CD4-positive, alpha-beta T cell (primary cell): ENCODE measurements at regions of chr15 and their contacts with region 1.

Region 1: GRCh38 chr15:99076552-99077308 is 28.1 kb upstream of the SYNM start:
- DNase-seq: peak in 11 of 14 experiments; percentile 6 to 77 (median 19)
- ATAC-seq: peak; percentile 76
- H3K4me3 ChIP-seq: peak overlapping the region; percentile 46
- H3K4me3 Mint-ChIP-seq: peak overlapping the region; percentile 82
- H3K27ac ChIP-seq: no peak overlapping the region
- H3K27ac Mint-ChIP-seq: no peak overlapping the region
- H3K4me1 ChIP-seq: peaks cover 4% of the 10 kb centered on the region
- H3K4me1 Mint-ChIP-seq: peaks cover 6% of the 10 kb centered on the region
- H3K27me3 ChIP-seq: no peaks in the 10 kb centered on the region
- H3K27me3 Mint-ChIP-seq: peaks cover 10% of the 10 kb centered on the region
- CTCF ChIP-seq: peak; percentile 87

Region 2: DNA sequence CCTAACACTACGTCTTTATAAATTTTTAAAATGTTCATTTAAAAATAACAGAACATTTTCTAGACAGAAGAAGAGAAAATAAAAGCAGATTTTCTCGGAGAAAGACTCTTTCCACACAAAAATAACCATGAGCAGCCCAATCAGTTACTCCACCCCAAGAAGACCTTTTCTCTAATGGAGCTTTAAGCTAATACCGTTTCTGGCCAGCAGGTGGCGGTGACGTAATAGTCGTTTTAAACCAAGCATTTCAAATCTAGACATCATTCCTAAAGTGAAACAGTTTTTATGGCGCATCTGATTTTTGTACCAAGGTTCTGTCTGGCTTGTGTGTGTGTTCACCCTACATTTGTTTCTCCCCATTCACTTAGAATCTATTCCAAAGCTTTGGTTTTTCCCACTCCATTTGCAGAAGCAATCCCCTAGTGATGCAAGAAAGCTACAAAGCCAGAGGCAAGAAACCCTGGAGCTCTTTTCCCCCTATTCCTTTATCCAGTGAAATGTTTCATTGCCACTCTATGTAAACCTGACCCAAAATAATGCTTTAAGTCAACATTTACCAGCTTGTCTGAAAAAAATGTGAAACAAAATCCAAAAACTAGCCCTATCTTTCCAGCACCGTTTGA is 765.1 kb before region 1 on chr15:
- CTCF ChIA-PET with region 1: no interaction called
- POLR2A ChIA-PET with region 1: no interaction called
- intact Hi-C with region 1: loop called in 1 of 2 experiments (anchors 10 kb)
- DNase-seq: peak; percentile 23 to 72 (median 57)
- ATAC-seq: no peak
- H3K4me3 ChIP-seq: no peak overlapping the region
- H3K4me3 Mint-ChIP-seq: no peak overlapping the region
- H3K27ac ChIP-seq: no peak overlapping the region
- H3K27ac Mint-ChIP-seq: no peak overlapping the region
- H3K4me1 ChIP-seq: peaks cover 2% of the 10 kb centered on the region
- H3K4me1 Mint-ChIP-seq: no peaks in the 10 kb centered on the region
- H3K27me3 ChIP-seq: no peaks in the 10 kb centered on the region
- H3K27me3 Mint-ChIP-seq: peaks cover 31% of the 10 kb centered on the region
- CTCF ChIP-seq: peak; percentile 88

Region 3: GRCh38 chr15:98599909-98600691 is 476.6 kb before region 1 on chr15:
- CTCF ChIA-PET with region 1: no interaction called
- POLR2A ChIA-PET with region 1: no interaction called
- intact Hi-C with region 1: loop called in 1 of 2 experiments (anchors 10 kb)
- DNase-seq: peak in 13 of 14 experiments; percentile 10 to 58 (median 25)
- ATAC-seq: peak; percentile 85
- H3K4me3 ChIP-seq: peak overlapping the region; percentile 49
- H3K4me3 Mint-ChIP-seq: peak overlapping the region; percentile 88
- H3K27ac ChIP-seq: peak overlapping the region in 1 of 2 donors; percentile 35
- H3K27ac Mint-ChIP-seq: peak overlapping the region; percentile 84
- H3K4me1 ChIP-seq: peaks cover 11% of the 10 kb centered on the region
- H3K4me1 Mint-ChIP-seq: peaks cover 22% of the 10 kb centered on the region
- H3K27me3 ChIP-seq: no peaks in the 10 kb centered on the region
- H3K27me3 Mint-ChIP-seq: peaks cover 4% of the 10 kb centered on the region
- CTCF ChIP-seq: no peak

Region 4: GRCh38 chr15:98713585-98714001 is 363.1 kb before region 1 on chr15:
- CTCF ChIA-PET with region 1: no interaction called
- POLR2A ChIA-PET with region 1: no interaction called
- intact Hi-C with region 1: no loop called
- DNase-seq: peak in 5 of 14 experiments; percentile 11 to 56 (median 26)
- ATAC-seq: peak; percentile 58
- H3K4me3 ChIP-seq: no peak overlapping the region
- H3K4me3 Mint-ChIP-seq: peak overlapping the region; percentile 30
- H3K27ac ChIP-seq: no peak overlapping the region
- H3K27ac Mint-ChIP-seq: peak overlapping the region; percentile 64
- H3K4me1 ChIP-seq: peaks cover 46% of the 10 kb centered on the region
- H3K4me1 Mint-ChIP-seq: peaks cover 71% of the 10 kb centered on the region
- H3K27me3 ChIP-seq: no peaks in the 10 kb centered on the region
- H3K27me3 Mint-ChIP-seq: no peaks in the 10 kb centered on the region
- CTCF ChIP-seq: no peak

Region 5: GRCh38 chr15:99059010-99059981 is 17.4 kb before region 1 on chr15:
- CTCF ChIA-PET with region 1: interaction called, 24 read pairs
- POLR2A ChIA-PET with region 1: interaction called, 4 read pairs
- intact Hi-C with region 1: no loop called
- DNase-seq: peak in 13 of 14 experiments; percentile 6 to 75 (median 30)
- ATAC-seq: peak; percentile 71
- H3K4me3 ChIP-seq: peak overlapping the region; percentile 45
- H3K4me3 Mint-ChIP-seq: peak overlapping the region; percentile 73
- H3K27ac ChIP-seq: no peak overlapping the region
- H3K27ac Mint-ChIP-seq: no peak overlapping the region
- H3K4me1 ChIP-seq: peaks cover 15% of the 10 kb centered on the region
- H3K4me1 Mint-ChIP-seq: no peaks in the 10 kb centered on the region
- H3K27me3 ChIP-seq: peaks cover 17 to 58% of the 10 kb centered on the region in 2 experiments
- H3K27me3 Mint-ChIP-seq: peaks cover 57% of the 10 kb centered on the region
- CTCF ChIP-seq: peak; percentile 45